A673 (cell line): ENCODE measurements at regions of chr13 and their contacts with region 1.

Region 1: GRCh38 chr13:72716776-72717175 is 10.7 kb downstream of the MZT1 start:
- DNase-seq: no peak
- H3K4me3 ChIP-seq: no peak overlapping the region
- H3K27ac ChIP-seq: no peak overlapping the region
- H3K4me1 ChIP-seq: no peaks in the 10 kb centered on the region
- H3K27me3 ChIP-seq: no peaks in the 10 kb centered on the region
- CTCF ChIP-seq: no peak

Region 2: GRCh38 chr13:72737033-72737432 is 20.3 kb after region 1 on chr13:
- CTCF ChIA-PET with region 1: no interaction called
- POLR2A ChIA-PET with region 1: no interaction called
- intact Hi-C with region 1: no loop called
- DNase-seq: no peak
- H3K4me3 ChIP-seq: no peak overlapping the region
- H3K27ac ChIP-seq: no peak overlapping the region
- H3K4me1 ChIP-seq: no peaks in the 10 kb centered on the region
- H3K27me3 ChIP-seq: no peaks in the 10 kb centered on the region
- CTCF ChIP-seq: no peak

Region 3: DNA sequence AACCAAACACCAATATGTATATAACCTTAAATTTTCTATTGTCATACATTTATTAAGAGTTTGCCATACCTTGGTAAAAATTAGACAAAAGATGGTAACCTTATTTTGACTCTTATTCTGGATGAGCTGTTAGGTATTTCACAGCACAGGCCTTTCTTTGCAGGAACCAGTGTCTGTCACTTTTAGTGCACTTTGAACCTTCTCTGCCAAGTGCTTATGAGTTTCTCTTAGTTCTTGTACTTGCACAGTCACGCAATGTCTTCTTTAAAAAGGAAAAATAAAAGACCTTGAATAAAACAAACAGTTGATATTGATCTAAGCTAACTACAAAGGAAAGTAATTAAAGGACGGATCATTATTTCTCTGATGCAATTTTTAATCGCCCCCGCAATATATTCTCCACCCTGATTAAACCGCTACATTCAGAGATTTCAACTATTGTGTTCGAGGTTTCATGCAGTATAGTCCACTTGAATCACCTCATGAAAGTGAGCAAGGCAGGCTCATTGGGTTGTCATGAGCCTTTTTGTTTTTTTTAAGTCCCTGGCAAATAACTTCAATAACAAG is 876.5 kb after region 1 on chr13:
- CTCF ChIA-PET with region 1: no interaction called
- POLR2A ChIA-PET with region 1: interaction called, 18 read pairs
- intact Hi-C with region 1: no loop called
- DNase-seq: no peak
- H3K4me3 ChIP-seq: no peak overlapping the region
- H3K27ac ChIP-seq: no peak overlapping the region
- H3K4me1 ChIP-seq: no peaks in the 10 kb centered on the region
- H3K27me3 ChIP-seq: no peaks in the 10 kb centered on the region
- CTCF ChIP-seq: no peak